Mammary epithelial cell (primary cell): ENCODE measurements at regions of chr7 and their contacts with region 1.

Region 1: GRCh38 chr7:102236592-102237287 is 49.9 kb upstream of the SH2B2 start:
- DNase-seq: peak; percentile 44
- H3K4me3 ChIP-seq: no peak overlapping the region
- H3K27ac ChIP-seq: no peak overlapping the region
- H3K4me1 ChIP-seq: no peaks in the 10 kb centered on the region
- H3K27me3 ChIP-seq: no peaks in the 10 kb centered on the region
- CTCF ChIP-seq: peak; percentile 78 to 87

Region 2: GRCh38 chr7:101688183-101688831 is 548.4 kb before region 1 on chr7:
- CTCF ChIA-PET with region 1: no interaction called
- dilution Hi-C with region 1: loop called (anchors 5 kb)
- in situ Hi-C with region 1: loop called in 1 of 2 experiments (anchors 25 kb)
- intact Hi-C with region 1: loop called (anchors 1 kb)
- DNase-seq: peak; percentile 34
- H3K4me3 ChIP-seq: peak overlapping the region in 2 of 3 experiments; percentile 34 to 35
- H3K27ac ChIP-seq: no peak overlapping the region
- H3K4me1 ChIP-seq: peaks cover 6% of the 10 kb centered on the region
- H3K27me3 ChIP-seq: no peaks in the 10 kb centered on the region
- CTCF ChIP-seq: peak; percentile 53 to 92

Region 3: GRCh38 chr7:101848208-101848951 is 388.4 kb before region 1 on chr7:
- CTCF ChIA-PET with region 1: no interaction called
- dilution Hi-C with region 1: no loop called
- in situ Hi-C with region 1: loop called in 1 of 2 experiments (anchors 25 kb)
- intact Hi-C with region 1: no loop called
- DNase-seq: no peak
- H3K4me3 ChIP-seq: no peak overlapping the region
- H3K27ac ChIP-seq: no peak overlapping the region
- H3K4me1 ChIP-seq: no peaks in the 10 kb centered on the region
- H3K27me3 ChIP-seq: no peaks in the 10 kb centered on the region
- CTCF ChIP-seq: no peak

Region 4: DNA sequence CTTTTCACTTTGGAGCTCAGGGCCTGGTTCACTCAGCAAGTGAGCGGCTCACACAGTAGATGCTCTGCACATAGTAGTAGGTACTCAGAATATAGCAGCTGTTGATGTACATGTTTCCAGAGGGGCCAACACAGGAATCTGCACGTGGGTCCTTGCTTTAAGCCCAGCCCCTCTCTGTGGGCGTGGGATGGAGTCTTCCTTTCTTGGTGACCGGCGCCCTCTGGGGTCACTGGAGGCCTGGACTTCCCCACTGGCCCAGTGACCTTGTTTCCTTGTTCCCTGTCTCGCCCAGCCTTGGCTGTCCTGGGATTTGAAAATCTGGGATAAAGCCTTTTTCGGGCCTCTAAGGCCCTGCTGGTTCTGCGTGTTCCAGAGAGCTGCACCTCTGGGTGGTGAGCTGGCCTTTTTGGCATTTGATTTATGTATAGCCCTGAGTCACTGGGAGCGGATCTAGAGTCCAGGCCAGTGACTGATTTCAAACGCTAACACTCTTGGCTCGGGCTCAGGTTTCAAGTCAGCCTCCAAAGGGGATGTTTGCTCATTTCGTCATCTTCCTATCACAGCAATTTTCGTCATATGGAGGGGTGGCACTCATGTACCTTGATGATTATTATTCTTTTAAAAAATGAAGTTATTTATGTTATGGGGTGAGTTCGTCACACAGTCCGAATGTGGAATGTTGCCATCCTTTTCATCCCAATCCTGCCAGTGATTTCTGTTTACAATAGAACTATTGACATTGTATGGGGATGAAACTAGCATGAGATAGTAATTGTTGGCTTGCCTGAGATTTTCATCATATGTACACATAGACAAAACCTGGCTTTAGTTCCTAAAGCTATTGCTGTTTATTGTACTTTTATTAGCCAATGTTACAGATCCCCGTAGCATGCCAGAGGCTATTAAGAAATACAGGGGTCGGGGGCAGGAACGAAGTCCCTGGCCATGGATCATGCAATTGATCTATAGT is 353.9 kb before region 1 on chr7:
- CTCF ChIA-PET with region 1: no interaction called
- dilution Hi-C with region 1: no loop called
- in situ Hi-C with region 1: no loop called
- intact Hi-C with region 1: loop called (anchors 10 kb)
- DNase-seq: peak; percentile 99
- H3K4me3 ChIP-seq: peak overlapping the region in 1 of 3 experiments; percentile 28
- H3K27ac ChIP-seq: peak overlapping the region; percentile 88
- H3K4me1 ChIP-seq: peaks cover 26% of the 10 kb centered on the region
- H3K27me3 ChIP-seq: no peaks in the 10 kb centered on the region
- CTCF ChIP-seq: no peak

Region 5: GRCh38 chr7:101941481-101942383 is 295.0 kb before region 1 on chr7:
- CTCF ChIA-PET with region 1: no interaction called
- dilution Hi-C with region 1: no loop called
- in situ Hi-C with region 1: no loop called
- intact Hi-C with region 1: loop called (anchors 2 kb)
- DNase-seq: peak; percentile 96
- H3K4me3 ChIP-seq: no peak overlapping the region
- H3K27ac ChIP-seq: peak overlapping the region; percentile 27
- H3K4me1 ChIP-seq: peaks cover 22% of the 10 kb centered on the region
- H3K27me3 ChIP-seq: no peaks in the 10 kb centered on the region
- CTCF ChIP-seq: peak in 1 of 2 donors; percentile 39